ENCODE measurements at regions of chr2 and their contacts with region 1.

Region 1: GRCh38 chr2:157302492-157303099 is 23.0 kb downstream of the ERMN start:
- DNase-seq: peak; percentile 72
- H3K4me3 Mint-ChIP-seq: no peak overlapping the region
- H3K27ac Mint-ChIP-seq: no peak overlapping the region
- H3K4me1 Mint-ChIP-seq: no peaks in the 10 kb centered on the region
- H3K27me3 Mint-ChIP-seq: peaks cover 12% of the 10 kb centered on the region
- CTCF ChIP-seq: peak; percentile 67

Region 2: DNA sequence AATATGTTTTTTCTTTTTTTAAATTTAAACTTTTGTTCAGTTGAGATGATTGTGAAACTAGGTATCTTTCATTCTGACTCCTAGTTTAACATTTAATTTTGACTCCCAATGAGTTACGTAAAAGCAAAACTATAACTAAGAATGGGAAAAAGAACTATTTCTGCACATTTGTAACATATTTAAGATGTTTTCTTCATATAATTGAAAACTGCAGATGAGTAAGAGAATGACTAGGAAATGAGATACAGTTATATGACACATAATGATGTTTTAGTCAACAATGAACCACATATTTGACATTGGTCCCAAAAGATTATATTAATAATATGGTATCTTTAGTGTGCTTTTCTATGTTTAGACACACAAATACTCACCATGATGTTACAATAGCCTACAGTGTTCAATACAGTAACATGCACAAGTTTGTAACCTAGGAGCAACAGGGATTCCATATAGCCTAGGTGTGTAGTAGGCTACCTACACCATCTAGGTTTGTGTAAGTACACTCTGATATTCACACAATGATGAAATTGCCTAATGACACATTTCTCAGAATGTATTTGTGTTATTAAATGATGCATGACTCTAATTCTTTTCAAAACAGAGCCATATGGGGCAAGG is 10.4 kb after region 1 on chr2:
- CTCF ChIA-PET with region 1: interaction called, 39 read pairs
- POLR2A ChIA-PET with region 1: no interaction called
- intact Hi-C with region 1: no loop called
- DNase-seq: no peak
- H3K4me3 Mint-ChIP-seq: no peak overlapping the region
- H3K27ac Mint-ChIP-seq: no peak overlapping the region
- H3K4me1 Mint-ChIP-seq: no peaks in the 10 kb centered on the region
- H3K27me3 Mint-ChIP-seq: no peaks in the 10 kb centered on the region
- CTCF ChIP-seq: no peak

Region 3: GRCh38 chr2:157327621-157328500 is 25.3 kb after region 1 on chr2:
- CTCF ChIA-PET with region 1: interaction called, 145 read pairs
- POLR2A ChIA-PET with region 1: no interaction called
- intact Hi-C with region 1: no loop called
- DNase-seq: peak; percentile 74
- H3K4me3 Mint-ChIP-seq: no peak overlapping the region
- H3K27ac Mint-ChIP-seq: no peak overlapping the region
- H3K4me1 Mint-ChIP-seq: peaks cover 8% of the 10 kb centered on the region
- H3K27me3 Mint-ChIP-seq: no peaks in the 10 kb centered on the region
- CTCF ChIP-seq: peak; percentile 88

Region 4: DNA sequence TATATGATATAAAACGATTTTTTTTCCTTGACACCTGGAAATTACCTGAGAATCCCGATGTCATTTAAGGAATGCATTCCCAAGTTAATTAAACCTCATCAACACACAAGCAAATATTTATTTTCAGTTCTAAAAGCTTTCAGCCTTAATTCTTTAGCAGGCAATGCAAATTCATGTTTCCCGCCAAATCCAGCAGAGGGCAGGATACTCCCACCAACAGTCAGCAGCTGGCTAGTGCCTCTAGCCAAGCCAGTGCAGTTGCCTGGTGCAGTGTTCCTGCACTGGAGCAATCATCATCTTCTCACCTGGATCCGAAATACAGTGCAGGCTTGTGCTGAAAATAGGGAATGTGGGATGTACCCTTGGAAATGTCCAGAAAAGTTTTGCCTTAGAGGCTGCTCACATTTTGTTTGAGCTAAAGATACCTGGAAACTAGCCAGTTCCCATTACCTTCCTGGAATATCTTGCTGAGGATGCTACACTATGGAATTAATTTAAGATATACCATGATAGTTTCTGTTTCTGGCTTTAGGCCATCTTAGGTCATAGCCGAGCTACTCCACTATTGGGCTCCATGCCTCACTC is 189.7 kb after region 1 on chr2:
- CTCF ChIA-PET with region 1: interaction called, 15 read pairs
- POLR2A ChIA-PET with region 1: interaction called, 3 read pairs
- intact Hi-C with region 1: loop called (anchors 5 kb)
- DNase-seq: peak; percentile 73
- H3K4me3 Mint-ChIP-seq: no peak overlapping the region
- H3K27ac Mint-ChIP-seq: no peak overlapping the region
- H3K4me1 Mint-ChIP-seq: peaks cover 21% of the 10 kb centered on the region
- H3K27me3 Mint-ChIP-seq: no peaks in the 10 kb centered on the region
- CTCF ChIP-seq: peak; percentile 58

Region 5: DNA sequence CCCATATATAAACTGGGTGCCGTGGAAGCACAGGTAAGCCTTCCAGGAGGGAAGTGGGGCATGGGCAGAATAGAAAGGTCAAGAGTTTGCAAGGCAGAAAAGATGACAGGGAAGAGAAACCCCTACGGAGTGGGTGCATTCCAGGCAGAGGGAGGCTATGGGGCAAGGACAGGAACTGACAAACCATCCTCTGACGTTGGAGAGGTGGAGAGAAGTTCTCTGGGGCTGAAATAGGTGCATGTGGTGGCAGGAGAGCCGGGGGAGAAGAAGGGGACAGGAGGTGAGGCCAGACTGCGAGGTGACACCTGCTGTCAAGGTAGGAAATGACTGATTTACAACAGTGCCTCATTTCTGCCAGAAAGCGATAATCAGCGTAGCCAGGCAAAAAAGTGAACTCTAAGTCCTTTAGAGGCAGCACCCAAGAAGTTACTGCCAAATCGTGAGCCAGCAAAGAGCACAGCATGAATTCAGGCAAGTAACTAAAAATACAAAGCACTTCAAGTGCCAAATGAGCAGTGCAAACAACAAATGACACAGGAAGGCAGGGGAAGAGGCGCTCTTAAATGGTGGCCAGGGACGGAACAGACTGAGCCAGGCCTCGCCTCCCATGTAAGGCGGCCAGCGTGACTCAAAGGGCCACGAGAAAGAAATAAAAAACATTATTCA is 439.4 kb after region 1 on chr2:
- CTCF ChIA-PET with region 1: no interaction called
- POLR2A ChIA-PET with region 1: no interaction called
- intact Hi-C with region 1: no loop called
- DNase-seq: no peak
- H3K4me3 Mint-ChIP-seq: no peak overlapping the region
- H3K27ac Mint-ChIP-seq: no peak overlapping the region
- H3K4me1 Mint-ChIP-seq: no peaks in the 10 kb centered on the region
- H3K27me3 Mint-ChIP-seq: no peaks in the 10 kb centered on the region
- CTCF ChIP-seq: no peak

Region 6: DNA sequence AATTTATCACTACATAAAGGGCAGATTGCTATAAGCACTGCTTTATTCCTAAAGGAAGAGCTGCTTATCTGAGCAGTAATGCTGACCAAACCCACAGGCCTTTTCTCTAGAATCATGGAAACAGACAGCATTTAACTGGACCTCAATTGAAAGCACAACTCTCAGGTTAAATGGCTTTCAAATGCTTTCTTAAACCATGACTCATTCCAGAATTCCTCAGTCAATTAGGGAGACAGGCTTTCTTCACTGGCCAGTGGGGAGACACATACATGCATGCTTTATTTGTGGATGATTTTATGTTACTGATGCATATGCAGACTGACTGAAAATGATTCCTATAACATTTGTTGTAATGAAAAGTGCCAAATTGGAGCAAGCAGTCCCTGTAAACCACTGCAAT is 458.9 kb after region 1 on chr2:
- CTCF ChIA-PET with region 1: interaction called, 3 read pairs
- POLR2A ChIA-PET with region 1: no interaction called
- intact Hi-C with region 1: loop called (anchors 10 kb)
- DNase-seq: no peak
- H3K4me3 Mint-ChIP-seq: no peak overlapping the region
- H3K27ac Mint-ChIP-seq: no peak overlapping the region
- H3K4me1 Mint-ChIP-seq: peaks cover 6% of the 10 kb centered on the region
- H3K27me3 Mint-ChIP-seq: no peaks in the 10 kb centered on the region
- CTCF ChIP-seq: no peak

Region 7: DNA sequence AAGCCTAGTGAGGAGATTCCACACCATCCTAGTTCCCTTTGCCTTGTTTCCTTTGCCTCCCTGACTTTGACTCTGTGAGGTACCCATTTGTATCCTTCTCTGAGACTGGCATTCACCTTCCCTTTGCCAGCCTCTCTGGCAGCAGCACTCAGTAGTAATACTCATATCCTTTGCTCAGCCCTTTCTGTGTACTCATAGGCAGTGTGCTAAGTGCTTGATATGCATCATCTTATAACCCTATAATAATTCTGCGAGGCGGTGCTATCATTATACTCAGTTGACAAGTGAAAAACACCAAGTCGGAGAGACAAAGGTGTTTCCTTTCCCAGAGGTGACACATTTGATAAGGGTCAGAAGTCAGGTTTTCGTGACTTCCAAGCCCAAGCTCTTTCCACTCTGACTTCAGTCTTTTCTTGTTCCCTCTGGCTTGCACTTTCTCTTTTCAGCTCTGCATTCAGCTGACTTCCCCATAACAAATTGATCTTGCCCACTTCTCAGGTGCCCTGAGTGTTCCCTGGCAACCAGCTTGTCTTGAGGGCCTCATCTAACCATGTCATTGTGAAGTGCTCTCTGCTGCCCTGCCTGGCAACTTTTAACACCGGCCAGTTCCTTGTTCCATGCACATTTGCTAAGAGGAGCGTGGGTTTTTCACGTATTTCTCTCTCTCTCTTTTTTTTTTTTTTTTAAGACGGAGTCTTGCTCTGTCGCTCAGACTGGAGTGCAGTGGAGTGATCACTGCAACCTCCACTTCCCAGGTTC is 704.5 kb after region 1 on chr2:
- CTCF ChIA-PET with region 1: interaction called, 8 read pairs
- POLR2A ChIA-PET with region 1: no interaction called
- intact Hi-C with region 1: loop called (anchors 1 kb)
- DNase-seq: no peak
- H3K4me3 Mint-ChIP-seq: no peak overlapping the region
- H3K27ac Mint-ChIP-seq: no peak overlapping the region
- H3K4me1 Mint-ChIP-seq: peaks cover 6% of the 10 kb centered on the region
- H3K27me3 Mint-ChIP-seq: no peaks in the 10 kb centered on the region
- CTCF ChIP-seq: no peak